Tibial artery (tissue), 4 donors: ENCODE measurements at regions of chr2 and their contacts with region 1.

Region 1: GRCh38 chr2:238370823-238371372 is 50.6 kb downstream of the TRAF3IP1 start:
- DNase-seq: peak in 1 of 2 donors; percentile 58
- H3K4me3 ChIP-seq: no peak overlapping the region
- H3K27ac ChIP-seq: no peak overlapping the region
- H3K4me1 ChIP-seq: no peaks in the 10 kb centered on the region
- H3K27me3 ChIP-seq: no peaks in the 10 kb centered on the region
- CTCF ChIP-seq: peak; percentile 77 to 91

Region 2: DNA sequence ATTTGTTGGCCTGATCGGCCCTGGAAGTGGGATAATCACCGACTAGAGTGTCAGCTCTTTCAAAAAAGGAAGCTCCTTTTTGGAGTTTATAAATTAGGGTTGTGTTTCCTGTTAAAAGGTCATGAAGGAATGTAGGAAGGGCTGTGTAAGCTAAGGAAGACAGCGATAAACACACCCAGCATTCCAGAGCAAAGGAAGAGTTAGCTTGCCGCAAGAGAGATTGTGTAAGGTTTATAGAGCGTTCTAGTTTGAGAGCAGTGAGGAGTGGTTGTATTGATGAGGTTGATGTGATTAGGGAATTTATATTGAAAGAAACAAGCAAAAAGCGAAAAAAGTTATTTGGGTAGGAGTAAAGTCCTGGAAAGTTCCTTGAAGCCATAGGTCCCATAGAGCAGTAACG is 163.9 kb before region 1 on chr2:
- intact Hi-C with region 1: no loop called
- DNase-seq: no peak
- H3K4me3 ChIP-seq: no peak overlapping the region
- H3K27ac ChIP-seq: no peak overlapping the region
- H3K4me1 ChIP-seq: peaks cover 0 to 13% (median 7%) of the 10 kb centered on the region in 4 donors
- H3K27me3 ChIP-seq: no peaks in the 10 kb centered on the region
- CTCF ChIP-seq: no peak

Region 3: GRCh38 chr2:238462782-238463396 is 92.0 kb after region 1 on chr2:
- intact Hi-C with region 1: loop called (anchors 5 kb)
- DNase-seq: no peak
- H3K4me3 ChIP-seq: no peak overlapping the region
- H3K27ac ChIP-seq: no peak overlapping the region
- H3K4me1 ChIP-seq: peaks cover 0 to 31% (median 17%) of the 10 kb centered on the region in 4 donors
- H3K27me3 ChIP-seq: no peaks in the 10 kb centered on the region
- CTCF ChIP-seq: peak; percentile 63 to 84

Region 4: GRCh38 chr2:238560234-238560633 is 189.3 kb after region 1 on chr2:
- intact Hi-C with region 1: no loop called
- DNase-seq: no peak
- H3K4me3 ChIP-seq: no peak overlapping the region
- H3K27ac ChIP-seq: no peak overlapping the region
- H3K4me1 ChIP-seq: no peaks in the 10 kb centered on the region
- H3K27me3 ChIP-seq: peaks cover 0 to 42% of the 10 kb centered on the region in 2 donors
- CTCF ChIP-seq: no peak

Region 5: GRCh38 chr2:238784671-238785527 is 414.0 kb after region 1 on chr2:
- intact Hi-C with region 1: loop called (anchors 10 kb)
- DNase-seq: peak; percentile 67 to 82
- H3K4me3 ChIP-seq: no peak overlapping the region
- H3K27ac ChIP-seq: no peak overlapping the region
- H3K4me1 ChIP-seq: peaks cover 0 to 11% (median 0%) of the 10 kb centered on the region in 4 donors
- H3K27me3 ChIP-seq: no peaks in the 10 kb centered on the region
- CTCF ChIP-seq: peak; percentile 80 to 92

Region 6: GRCh38 chr2:239257511-239257937 is 886.6 kb after region 1 on chr2:
- intact Hi-C with region 1: no loop called
- DNase-seq: no peak
- H3K4me3 ChIP-seq: no peak overlapping the region
- H3K27ac ChIP-seq: no peak overlapping the region
- H3K4me1 ChIP-seq: peaks cover 0 to 5% (median 1%) of the 10 kb centered on the region in 4 donors
- H3K27me3 ChIP-seq: no peaks in the 10 kb centered on the region
- CTCF ChIP-seq: no peak